Sigmoid colon (tissue), 7 donors: ENCODE measurements at regions of chr3 and their contacts with region 1.

Region 1: GRCh38 chr3:8970971-8971589 is 7.8 kb upstream of the RAD18 start:
- DNase-seq: no peak
- H3K4me3 ChIP-seq: no peak overlapping the region
- H3K27ac ChIP-seq: no peak overlapping the region
- H3K4me1 ChIP-seq: peaks cover 0 to 3% (median 0%) of the 10 kb centered on the region in 4 donors
- H3K27me3 ChIP-seq: peaks cover 0 to 9% (median 0%) of the 10 kb centered on the region in 3 donors
- CTCF ChIP-seq: peak; percentile 87 to 97 (median 96)
- EP300 ChIP-seq: no peak
- POLR2A ChIP-seq: no peak

Region 2: DNA sequence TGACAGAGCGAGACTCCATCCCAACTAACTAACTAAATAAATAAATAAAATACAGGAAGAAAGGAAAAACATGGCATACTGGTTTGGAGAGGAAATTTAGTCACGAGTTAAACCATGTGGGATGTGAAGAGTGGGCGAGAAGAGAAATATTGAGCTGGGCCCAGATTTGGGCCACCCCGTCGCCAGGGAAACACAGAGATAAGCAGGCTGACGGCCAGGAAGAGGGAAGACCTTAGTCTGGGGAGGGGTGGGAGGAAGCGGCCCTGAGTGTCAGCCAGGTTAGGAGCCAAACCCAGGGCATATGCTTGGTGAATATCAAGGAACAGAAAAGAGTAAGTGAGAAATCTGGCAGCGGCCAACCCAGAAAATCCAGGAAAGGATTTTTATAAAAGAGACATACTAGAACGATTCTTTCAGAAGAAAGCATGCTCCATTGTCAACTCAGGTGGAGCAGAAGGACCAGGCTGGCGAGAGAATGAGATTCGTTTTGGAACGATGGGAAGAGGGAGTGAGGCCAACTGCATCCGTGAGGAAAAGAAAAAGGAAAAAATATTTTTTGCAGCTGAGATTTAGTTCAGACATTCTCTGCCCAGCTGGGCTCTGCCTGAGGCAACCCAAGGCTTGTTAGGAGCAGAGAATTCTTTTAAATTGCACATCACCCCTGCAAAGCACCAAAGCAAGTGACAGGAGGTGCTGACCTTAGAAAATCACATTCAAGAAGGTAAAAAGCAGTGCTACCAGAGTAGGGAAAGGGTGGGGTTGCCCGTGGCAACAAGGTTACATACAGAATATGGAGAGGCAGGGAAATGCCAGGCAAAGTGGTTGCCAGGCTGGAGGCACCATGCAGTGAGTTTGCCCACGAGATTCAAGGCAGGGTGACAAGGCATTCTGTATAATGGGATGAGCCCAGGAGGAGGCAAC is 51.5 kb after region 1 on chr3:
- intact Hi-C with region 1: no loop called
- DNase-seq: no peak
- H3K4me3 ChIP-seq: no peak overlapping the region
- H3K27ac ChIP-seq: no peak overlapping the region
- H3K4me1 ChIP-seq: peaks cover 0 to 3% (median 2%) of the 10 kb centered on the region in 4 donors
- H3K27me3 ChIP-seq: no peaks in the 10 kb centered on the region
- CTCF ChIP-seq: no peak
- EP300 ChIP-seq: no peak
- POLR2A ChIP-seq: no peak

Region 3: GRCh38 chr3:9067352-9067975 is 96.4 kb after region 1 on chr3:
- intact Hi-C with region 1: loop called (anchors 1 kb)
- DNase-seq: peak; percentile 67
- H3K4me3 ChIP-seq: no peak overlapping the region
- H3K27ac ChIP-seq: no peak overlapping the region
- H3K4me1 ChIP-seq: no peaks in the 10 kb centered on the region
- H3K27me3 ChIP-seq: no peaks in the 10 kb centered on the region
- CTCF ChIP-seq: peak; percentile 87 to 97 (median 91)
- EP300 ChIP-seq: no peak
- POLR2A ChIP-seq: no peak

Region 4: DNA sequence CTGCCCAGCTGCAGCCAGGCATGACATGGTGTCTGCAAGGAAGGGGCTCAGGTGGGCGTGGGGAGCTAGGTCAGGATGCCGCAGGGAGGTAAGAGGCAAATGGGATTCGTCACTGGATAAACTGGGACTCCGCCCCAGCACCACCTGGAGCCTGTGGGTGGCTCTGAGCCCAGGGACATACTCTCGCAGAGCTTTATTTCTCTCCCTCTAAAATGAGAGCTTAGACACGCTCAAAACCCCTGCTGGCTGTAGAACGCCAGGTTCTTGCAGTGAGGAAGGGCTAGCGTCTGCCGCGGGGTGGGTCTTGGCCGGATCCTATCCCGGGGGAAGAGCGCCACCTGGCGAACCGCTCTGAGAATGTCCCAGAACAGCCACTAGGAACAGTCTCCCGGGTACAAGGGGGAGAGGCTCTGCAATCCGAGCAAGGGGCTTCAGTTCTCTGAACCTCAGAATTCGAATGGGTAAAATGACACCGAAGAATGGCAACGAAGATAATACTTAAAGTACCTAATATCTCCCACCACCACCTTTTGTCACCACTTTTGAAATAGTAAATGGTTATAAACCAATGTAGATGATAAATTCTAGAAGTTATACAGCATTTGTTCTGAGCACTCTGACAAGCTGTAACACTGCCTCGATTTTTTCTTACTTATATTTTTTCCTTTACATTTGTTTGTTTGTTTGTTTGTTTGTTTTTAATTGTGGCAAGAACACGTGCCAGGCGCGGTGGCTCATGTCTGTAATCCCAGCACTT is 331.5 kb after region 1 on chr3:
- intact Hi-C with region 1: loop called (anchors 1 kb)
- DNase-seq: peak; percentile 88
- H3K4me3 ChIP-seq: peak overlapping the region in 3 of 4 donors; percentile 13 to 38 (median 31)
- H3K27ac ChIP-seq: no peak overlapping the region
- H3K4me1 ChIP-seq: peaks cover 0 to 10% (median 3%) of the 10 kb centered on the region in 4 donors
- H3K27me3 ChIP-seq: no peaks in the 10 kb centered on the region
- CTCF ChIP-seq: peak; percentile 67 to 88 (median 86)
- EP300 ChIP-seq: no peak
- POLR2A ChIP-seq: no peak

Region 5: GRCh38 chr3:9396700-9397521 is 425.8 kb after region 1 on chr3:
- intact Hi-C with region 1: no loop called
- DNase-seq: peak; percentile 99
- H3K4me3 ChIP-seq: peak overlapping the region; percentile 71 to 92 (median 86)
- H3K27ac ChIP-seq: peak overlapping the region; percentile 98 to 99 (median 99)
- H3K4me1 ChIP-seq: peaks cover 0 to 72% (median 70%) of the 10 kb centered on the region in 4 donors
- H3K27me3 ChIP-seq: no peaks in the 10 kb centered on the region
- CTCF ChIP-seq: no peak
- EP300 ChIP-seq: peak in 1 of 4 donors; percentile 2
- POLR2A ChIP-seq: peak; percentile 96 to 97